ENCODE measurements at regions of chr9 and their contacts with region 1.

Region 1: GRCh38 chr9:130893341-130894101 is 3.1 kb downstream of the QRFP start:
- H3K4me3 Mint-ChIP-seq: peak overlapping the region; percentile 78
- H3K27ac Mint-ChIP-seq: peak overlapping the region; percentile 90
- H3K4me1 Mint-ChIP-seq: peaks cover 18% of the 10 kb centered on the region
- H3K27me3 Mint-ChIP-seq: no peaks in the 10 kb centered on the region

Region 2: GRCh38 chr9:131046581-131047202 is 153.2 kb after region 1 on chr9:
- intact Hi-C with region 1: loop called (anchors 10 kb)
- H3K4me3 Mint-ChIP-seq: peak overlapping the region; percentile 48
- H3K27ac Mint-ChIP-seq: no peak overlapping the region
- H3K4me1 Mint-ChIP-seq: peaks cover 6% of the 10 kb centered on the region
- H3K27me3 Mint-ChIP-seq: peaks cover 5% of the 10 kb centered on the region

Region 3: DNA sequence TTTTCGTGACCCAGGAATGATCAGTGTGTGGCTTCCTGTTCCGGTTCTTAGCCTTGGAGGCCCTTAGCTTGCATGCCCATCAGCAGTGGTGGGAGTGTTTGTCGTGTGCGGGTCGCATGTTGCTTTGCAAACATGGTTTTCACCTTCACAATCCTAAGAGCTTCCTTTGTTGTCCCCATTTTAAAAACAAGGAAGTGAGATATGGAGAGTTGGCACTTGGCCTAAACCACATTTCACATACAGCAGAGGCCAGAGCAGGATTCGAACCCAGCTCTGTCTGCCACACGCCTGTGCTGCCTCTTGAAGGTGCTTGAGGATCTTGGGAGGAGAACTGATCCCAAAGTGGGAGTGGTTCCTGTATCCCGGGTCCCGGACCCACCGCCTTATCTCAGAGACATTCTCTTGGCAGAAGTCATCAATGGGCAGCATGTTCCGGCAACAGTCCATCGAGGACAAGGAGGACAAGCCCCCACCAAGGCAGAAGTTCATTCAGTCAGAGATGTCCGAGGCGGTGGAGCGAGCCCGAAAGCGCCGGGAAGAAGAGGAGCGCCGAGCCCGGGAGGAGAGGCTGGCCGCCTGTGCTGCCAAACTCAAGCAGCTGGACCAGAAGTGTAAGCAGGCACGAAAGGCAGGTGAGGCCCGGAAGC is 571.0 kb after region 1 on chr9:
- intact Hi-C with region 1: no loop called
- H3K4me3 Mint-ChIP-seq: no peak overlapping the region
- H3K27ac Mint-ChIP-seq: no peak overlapping the region
- H3K4me1 Mint-ChIP-seq: peaks cover 10% of the 10 kb centered on the region
- H3K27me3 Mint-ChIP-seq: no peaks in the 10 kb centered on the region